Activated T-helper 1 cell treated with anti-CD3 and anti-CD28 coated beads, Interleukin-12 subunit alpha, Interleukin-12 subunit beta, Interleukin-2, Interleukin-4 antibody, amounts not matched to agents 30 ng/mL and 10 ng/mL and 1 ng/mL, durations not matched to agents 14 hours and 24 hours and 36 hours (primary cell): ENCODE measurements at regions of chr14 and their contacts with region 1.

Region 1: GRCh38 chr14:50109342-50109741 is 7.0 kb downstream of the VCPKMT start:
- DNase-seq: no peak
- H3K4me3 Mint-ChIP-seq: no peak overlapping the region
- H3K27ac Mint-ChIP-seq: no peak overlapping the region
- H3K4me1 Mint-ChIP-seq: peaks cover 28% of the 10 kb centered on the region
- H3K27me3 Mint-ChIP-seq: no peaks in the 10 kb centered on the region

Region 2: DNA sequence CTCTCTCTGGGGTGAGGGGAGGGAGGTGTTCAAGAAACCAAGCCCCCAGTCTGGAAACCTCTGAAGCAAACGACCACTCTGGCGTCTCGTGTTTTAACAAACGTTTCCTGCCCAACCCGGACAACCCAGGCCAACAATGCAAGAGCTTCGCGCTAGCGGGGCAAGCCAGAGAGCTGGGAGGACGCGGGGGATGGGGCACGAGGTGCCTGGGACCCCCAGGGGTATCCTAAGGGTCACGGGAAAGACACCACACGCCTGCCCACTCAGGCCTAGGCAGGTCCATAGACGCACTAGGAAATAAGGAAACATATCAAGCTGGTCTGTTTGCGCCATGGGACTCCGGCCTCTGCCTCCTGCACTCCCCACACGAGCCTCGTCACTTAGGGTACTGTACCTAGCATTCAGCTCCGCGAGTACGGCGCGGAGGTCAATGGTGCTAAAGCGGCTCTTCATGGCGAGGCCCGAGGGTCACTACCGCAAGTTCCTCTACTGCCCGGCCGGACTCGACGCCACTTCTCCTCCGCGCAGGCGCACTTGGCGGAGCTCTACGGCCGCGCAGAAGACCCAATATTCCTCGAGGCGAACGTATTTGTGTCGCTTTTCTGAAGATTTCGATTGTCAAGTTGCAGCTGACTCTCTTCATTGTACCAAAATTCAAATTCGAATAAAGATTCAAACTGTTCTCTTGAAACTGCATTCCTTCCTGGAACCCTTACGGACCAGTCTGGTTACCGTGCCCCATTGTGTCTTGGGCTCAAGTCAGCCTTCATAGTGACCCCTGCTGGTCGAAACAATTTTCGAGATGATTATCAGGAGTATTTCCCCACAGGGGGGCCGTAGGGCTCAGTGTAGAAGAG is 256.8 kb before region 1 on chr14 and contains the start of gene NEMF:
- intact Hi-C with region 1: loop called (anchors 1 kb)
- DNase-seq: peak; percentile 78
- H3K4me3 Mint-ChIP-seq: peak within 1 kb of the TSS; percentile 96
- H3K27ac Mint-ChIP-seq: peak within 1 kb of the TSS; percentile 97
- H3K4me1 Mint-ChIP-seq: peaks cover 50% of the 10 kb centered on the region
- H3K27me3 Mint-ChIP-seq: no peaks in the 10 kb centered on the region
- total RNA-seq, gene NEMF: 79.9 and 89.3 TPM in 2 replicates

Region 3: GRCh38 chr14:49867831-49868723 is 241.3 kb before region 1 on chr14:
- intact Hi-C with region 1: loop called (anchors 1 kb)
- DNase-seq: peak; percentile 92
- H3K4me3 Mint-ChIP-seq: peak overlapping the region; percentile 93
- H3K27ac Mint-ChIP-seq: peak overlapping the region; percentile 97
- H3K4me1 Mint-ChIP-seq: peaks cover 20% of the 10 kb centered on the region
- H3K27me3 Mint-ChIP-seq: no peaks in the 10 kb centered on the region

Region 4: GRCh38 chr14:49879683-49880204 is 229.6 kb before region 1 on chr14:
- intact Hi-C with region 1: loop called (anchors 1 kb)
- DNase-seq: peak; percentile 45
- H3K4me3 Mint-ChIP-seq: no peak overlapping the region
- H3K27ac Mint-ChIP-seq: peak overlapping the region; percentile 61
- H3K4me1 Mint-ChIP-seq: peaks cover 34% of the 10 kb centered on the region
- H3K27me3 Mint-ChIP-seq: peaks cover 3% of the 10 kb centered on the region

Region 5: DNA sequence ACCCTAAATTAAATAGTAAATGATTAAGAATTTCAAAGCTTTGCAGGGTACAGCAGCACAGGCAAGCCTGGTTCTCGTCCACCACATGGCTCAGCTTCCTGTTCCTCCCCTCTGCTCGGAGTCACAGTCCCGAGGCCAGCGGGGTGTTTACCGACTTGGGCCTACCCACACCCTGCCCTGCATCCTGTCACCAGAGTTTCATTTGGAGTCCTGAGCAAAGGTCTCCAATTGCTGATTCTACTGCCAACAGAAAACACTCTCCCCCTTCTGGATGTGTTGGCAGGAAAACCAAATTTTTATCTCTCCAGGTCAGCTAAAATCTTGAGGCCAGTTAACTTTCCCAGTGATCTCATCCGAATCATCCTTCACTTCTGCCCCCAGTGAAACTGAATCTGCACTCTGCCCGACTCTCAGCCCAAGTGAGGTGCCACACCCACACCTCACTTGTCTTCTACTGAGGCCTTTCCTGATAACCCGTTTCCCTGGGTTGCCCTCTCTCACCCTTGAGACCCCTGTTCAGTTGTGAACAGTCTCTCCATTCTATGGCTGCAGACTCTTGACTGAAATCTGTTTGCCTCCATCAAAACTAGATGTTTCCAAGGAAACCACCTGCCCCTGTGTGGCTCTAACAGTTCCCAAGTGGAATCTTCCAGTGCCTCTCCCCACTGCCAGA is 64.2 kb before region 1 on chr14:
- intact Hi-C with region 1: loop called (anchors 1 kb)
- DNase-seq: peak; percentile 72
- H3K4me3 Mint-ChIP-seq: peak overlapping the region; percentile 21
- H3K27ac Mint-ChIP-seq: peak overlapping the region; percentile 97
- H3K4me1 Mint-ChIP-seq: peaks cover 66% of the 10 kb centered on the region
- H3K27me3 Mint-ChIP-seq: no peaks in the 10 kb centered on the region

Region 6: DNA sequence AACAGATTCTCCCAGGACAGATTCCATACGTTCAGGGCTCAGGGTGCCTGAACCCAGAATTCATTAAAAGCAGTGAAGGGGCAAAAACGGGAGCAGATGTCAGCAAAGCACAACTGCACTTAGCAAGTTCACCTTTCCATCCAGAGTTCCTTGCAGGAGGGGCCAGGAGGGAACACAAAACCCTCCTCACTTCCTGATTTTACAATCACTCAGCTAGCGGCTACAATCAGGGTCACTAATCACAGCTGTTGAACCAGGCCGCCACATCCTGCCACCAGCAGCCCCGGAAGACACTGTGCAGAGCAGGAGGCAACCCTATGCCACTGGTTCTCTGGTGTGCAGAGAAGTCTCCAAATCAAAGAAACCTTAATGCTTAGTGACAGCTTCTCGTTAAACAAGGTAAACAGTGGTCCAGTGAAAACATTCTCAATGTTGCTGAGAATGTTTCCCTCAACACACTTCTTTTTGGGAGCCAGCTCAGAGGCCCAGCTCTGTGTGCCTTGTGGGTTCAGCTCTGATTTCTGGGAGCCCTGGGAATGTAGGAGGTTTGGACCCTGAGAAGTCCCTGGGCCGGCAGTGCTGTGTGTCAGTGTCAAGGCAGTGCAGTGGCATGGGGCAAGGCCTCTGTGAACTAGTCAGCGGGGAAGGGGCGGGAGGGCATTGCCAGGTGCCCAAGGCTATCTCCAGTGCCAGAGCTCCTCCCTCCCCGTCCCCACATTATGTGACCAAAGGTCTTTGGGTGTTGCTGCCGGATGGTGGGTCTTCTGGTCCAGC is 47.5 kb before region 1 on chr14:
- intact Hi-C with region 1: loop called (anchors 1 kb)
- DNase-seq: peak; percentile 67
- H3K4me3 Mint-ChIP-seq: peak overlapping the region; percentile 99
- H3K27ac Mint-ChIP-seq: peak overlapping the region; percentile 100
- H3K4me1 Mint-ChIP-seq: peaks cover 94% of the 10 kb centered on the region
- H3K27me3 Mint-ChIP-seq: no peaks in the 10 kb centered on the region